Activated CD4-positive, alpha-beta memory T cell treated with anti-CD3 and anti-CD28 coated beads for 36 hours (primary cell): ENCODE measurements at regions of chr6 and their contacts with region 1.

Region 1: DNA sequence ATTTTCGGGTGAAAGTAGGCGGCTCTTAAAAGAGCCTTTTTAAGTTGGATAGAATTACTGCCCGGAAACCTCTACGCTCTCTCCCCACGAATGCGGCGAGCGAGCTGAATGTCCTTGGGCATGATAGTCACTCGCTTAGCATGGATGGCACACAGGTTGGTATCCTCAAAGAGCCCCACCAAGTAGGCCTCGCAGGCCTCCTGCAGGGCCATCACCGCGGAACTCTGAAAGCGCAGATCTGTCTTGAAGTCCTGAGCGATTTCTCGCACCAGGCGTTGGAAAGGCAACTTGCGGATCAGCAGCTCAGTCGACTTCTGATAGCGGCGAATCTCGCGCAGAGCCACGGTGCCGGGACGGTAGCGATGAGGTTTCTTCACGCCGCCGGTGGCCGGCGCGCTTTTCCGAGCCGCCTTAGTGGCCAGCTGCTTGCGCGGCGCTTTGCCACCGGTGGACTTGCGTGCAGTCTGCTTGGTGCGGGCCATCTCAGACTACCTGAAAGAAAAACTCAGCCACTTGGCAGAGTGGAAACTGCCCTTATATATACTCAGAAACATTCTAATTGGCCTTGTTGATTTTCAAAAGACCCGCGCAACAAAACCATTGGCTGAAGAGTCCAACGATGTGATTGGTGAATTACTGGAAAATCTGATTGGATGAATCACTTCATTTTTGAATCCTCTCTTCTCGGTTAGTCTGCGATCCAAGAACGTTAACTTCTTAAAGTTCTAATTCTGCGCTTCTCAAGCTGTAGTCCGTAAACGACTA is 93.9 kb upstream of the BTN3A2 start:
- DNase-seq: peak; percentile 86
- H3K4me3 Mint-ChIP-seq: no peak overlapping the region
- H3K27ac Mint-ChIP-seq: no peak overlapping the region
- H3K4me1 Mint-ChIP-seq: peaks cover 22% of the 10 kb centered on the region
- H3K27me3 Mint-ChIP-seq: peaks cover 2% of the 10 kb centered on the region

Region 2: DNA sequence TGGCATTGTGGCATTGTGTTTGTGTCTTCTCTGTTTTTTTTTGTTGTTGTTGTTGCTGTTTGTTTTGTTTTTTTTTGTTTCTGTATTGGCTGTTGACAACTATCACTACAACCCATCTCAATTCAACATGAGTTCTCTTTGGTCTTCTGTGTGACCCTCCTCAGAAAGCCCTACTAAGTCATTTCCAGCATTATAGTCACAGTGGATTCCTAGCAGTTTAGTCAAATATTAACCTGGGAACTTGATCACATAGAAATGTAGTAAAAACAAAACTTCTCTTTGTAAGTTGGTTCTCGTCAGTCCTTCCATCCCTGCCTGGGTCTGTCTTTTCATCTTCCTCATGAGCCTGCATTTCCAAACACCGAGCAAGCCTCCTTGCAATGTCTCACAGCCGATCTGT is 357.3 kb before region 1 on chr6:
- CTCF ChIA-PET with region 1: no interaction called
- POLR2A ChIA-PET with region 1: no interaction called
- intact Hi-C with region 1: no loop called
- DNase-seq: peak; percentile 35
- H3K4me3 Mint-ChIP-seq: no peak overlapping the region
- H3K27ac Mint-ChIP-seq: peak overlapping the region; percentile 65
- H3K4me1 Mint-ChIP-seq: peaks cover 52% of the 10 kb centered on the region
- H3K27me3 Mint-ChIP-seq: no peaks in the 10 kb centered on the region

Region 3: GRCh38 chr6:26054857-26055669 is 216.0 kb before region 1 on chr6:
- CTCF ChIA-PET with region 1: no interaction called
- POLR2A ChIA-PET with region 1: interaction called, 4 read pairs
- intact Hi-C with region 1: loop called (anchors 5 kb)
- DNase-seq: peak; percentile 94
- H3K4me3 Mint-ChIP-seq: peak overlapping the region; percentile 93
- H3K27ac Mint-ChIP-seq: peak overlapping the region; percentile 98
- H3K4me1 Mint-ChIP-seq: peaks cover 22% of the 10 kb centered on the region
- H3K27me3 Mint-ChIP-seq: peaks cover 14% of the 10 kb centered on the region

Region 4: GRCh38 chr6:26141378-26141904 is 129.6 kb before region 1 on chr6:
- CTCF ChIA-PET with region 1: no interaction called
- POLR2A ChIA-PET with region 1: no interaction called
- intact Hi-C with region 1: no loop called
- DNase-seq: no peak
- H3K4me3 Mint-ChIP-seq: no peak overlapping the region
- H3K27ac Mint-ChIP-seq: no peak overlapping the region
- H3K4me1 Mint-ChIP-seq: no peaks in the 10 kb centered on the region
- H3K27me3 Mint-ChIP-seq: no peaks in the 10 kb centered on the region

Region 5: DNA sequence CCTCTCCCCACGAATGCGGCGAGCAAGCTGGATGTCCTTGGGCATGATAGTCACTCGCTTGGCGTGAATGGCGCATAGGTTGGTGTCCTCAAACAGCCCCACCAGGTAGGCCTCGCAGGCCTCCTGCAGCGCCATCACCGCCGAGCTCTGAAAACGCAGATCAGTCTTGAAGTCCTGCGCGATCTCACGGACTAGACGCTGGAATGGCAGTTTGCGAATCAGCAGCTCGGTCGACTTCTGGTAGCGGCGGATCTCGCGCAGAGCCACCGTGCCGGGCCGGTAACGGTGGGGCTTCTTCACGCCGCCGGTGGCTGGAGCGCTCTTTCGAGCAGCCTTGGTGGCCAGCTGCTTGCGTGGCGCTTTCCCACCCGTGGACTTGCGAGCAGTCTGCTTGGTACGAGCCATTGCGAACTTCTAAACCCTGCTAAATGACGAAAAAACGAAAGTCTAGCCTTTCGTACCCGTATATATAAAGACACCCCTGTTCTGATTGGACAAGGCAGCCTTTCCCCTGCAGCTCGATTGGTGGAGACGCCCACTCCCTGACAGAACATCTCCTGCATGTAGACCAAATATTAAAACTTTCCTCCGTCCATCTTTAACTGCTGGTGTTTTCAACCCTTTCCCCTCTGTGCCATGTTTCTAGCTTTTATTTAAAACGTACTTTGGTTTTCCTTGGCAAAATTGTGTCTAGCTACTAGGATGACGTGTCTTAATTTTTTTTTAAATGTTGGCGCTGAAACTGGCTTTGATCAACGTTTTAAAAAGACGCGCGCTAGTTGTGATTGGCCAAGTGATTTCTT is 74.0 kb before region 1 on chr6:
- CTCF ChIA-PET with region 1: interaction called, 3 read pairs
- POLR2A ChIA-PET with region 1: interaction called, 125 read pairs
- intact Hi-C with region 1: no loop called
- DNase-seq: peak; percentile 84
- H3K4me3 Mint-ChIP-seq: peak overlapping the region; percentile 86
- H3K27ac Mint-ChIP-seq: peak overlapping the region; percentile 99
- H3K4me1 Mint-ChIP-seq: peaks cover 31% of the 10 kb centered on the region
- H3K27me3 Mint-ChIP-seq: peaks cover 3% of the 10 kb centered on the region

Region 6: DNA sequence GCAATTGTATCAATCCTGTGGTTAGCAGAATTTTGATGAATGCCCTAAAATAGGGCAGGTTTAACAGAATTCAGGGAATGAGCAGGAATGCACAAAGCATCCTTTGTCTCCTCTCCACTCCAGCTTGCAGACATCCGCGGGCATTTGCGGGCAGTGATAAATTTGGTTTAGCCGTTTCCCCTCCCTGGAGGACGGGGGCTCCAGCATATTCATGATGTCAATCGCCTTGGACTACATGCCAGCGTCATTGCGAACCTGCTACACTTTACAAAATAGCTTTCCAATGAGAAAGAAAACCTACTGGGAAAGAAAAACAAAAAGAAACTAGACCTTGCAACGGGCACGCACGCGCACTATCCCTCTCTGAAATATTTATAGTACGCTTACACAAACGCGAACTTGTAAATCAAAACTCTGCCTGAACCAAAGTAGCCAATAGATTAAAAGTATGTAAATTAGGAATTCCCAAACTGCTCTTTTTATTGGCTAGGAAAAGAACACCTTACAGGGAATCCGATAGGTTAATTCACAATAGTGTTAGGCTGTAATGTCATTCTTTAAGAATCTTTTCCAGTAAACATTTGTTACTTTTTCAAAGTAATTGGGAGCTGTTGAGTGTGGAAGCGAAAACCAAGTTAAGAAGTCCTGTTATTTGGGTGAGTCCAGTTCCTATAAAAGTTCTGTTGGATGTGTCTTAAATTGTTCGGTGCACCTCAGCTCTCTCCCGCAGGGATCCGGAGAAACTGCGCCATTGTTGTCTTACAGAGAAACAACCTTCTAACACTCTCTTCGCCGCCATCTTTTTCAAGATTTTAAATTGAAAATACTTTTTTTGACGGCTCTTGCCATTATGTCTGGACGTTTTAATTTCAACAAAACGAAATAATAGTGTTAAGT is 47.2 kb before region 1 on chr6:
- CTCF ChIA-PET with region 1: no interaction called
- POLR2A ChIA-PET with region 1: interaction called, 11 read pairs
- intact Hi-C with region 1: no loop called
- DNase-seq: peak; percentile 77
- H3K4me3 Mint-ChIP-seq: no peak overlapping the region
- H3K27ac Mint-ChIP-seq: no peak overlapping the region
- H3K4me1 Mint-ChIP-seq: peaks cover 13% of the 10 kb centered on the region
- H3K27me3 Mint-ChIP-seq: no peaks in the 10 kb centered on the region

Region 7: GRCh38 chr6:26249957-26250697 is 21.0 kb before region 1 on chr6:
- CTCF ChIA-PET with region 1: interaction called, 49 read pairs
- POLR2A ChIA-PET with region 1: interaction called, 27 read pairs
- intact Hi-C with region 1: loop called (anchors 1 kb)
- DNase-seq: peak; percentile 84
- H3K4me3 Mint-ChIP-seq: peak overlapping the region; percentile 82
- H3K27ac Mint-ChIP-seq: peak overlapping the region; percentile 99
- H3K4me1 Mint-ChIP-seq: peaks cover 22% of the 10 kb centered on the region
- H3K27me3 Mint-ChIP-seq: no peaks in the 10 kb centered on the region

Region 8: DNA sequence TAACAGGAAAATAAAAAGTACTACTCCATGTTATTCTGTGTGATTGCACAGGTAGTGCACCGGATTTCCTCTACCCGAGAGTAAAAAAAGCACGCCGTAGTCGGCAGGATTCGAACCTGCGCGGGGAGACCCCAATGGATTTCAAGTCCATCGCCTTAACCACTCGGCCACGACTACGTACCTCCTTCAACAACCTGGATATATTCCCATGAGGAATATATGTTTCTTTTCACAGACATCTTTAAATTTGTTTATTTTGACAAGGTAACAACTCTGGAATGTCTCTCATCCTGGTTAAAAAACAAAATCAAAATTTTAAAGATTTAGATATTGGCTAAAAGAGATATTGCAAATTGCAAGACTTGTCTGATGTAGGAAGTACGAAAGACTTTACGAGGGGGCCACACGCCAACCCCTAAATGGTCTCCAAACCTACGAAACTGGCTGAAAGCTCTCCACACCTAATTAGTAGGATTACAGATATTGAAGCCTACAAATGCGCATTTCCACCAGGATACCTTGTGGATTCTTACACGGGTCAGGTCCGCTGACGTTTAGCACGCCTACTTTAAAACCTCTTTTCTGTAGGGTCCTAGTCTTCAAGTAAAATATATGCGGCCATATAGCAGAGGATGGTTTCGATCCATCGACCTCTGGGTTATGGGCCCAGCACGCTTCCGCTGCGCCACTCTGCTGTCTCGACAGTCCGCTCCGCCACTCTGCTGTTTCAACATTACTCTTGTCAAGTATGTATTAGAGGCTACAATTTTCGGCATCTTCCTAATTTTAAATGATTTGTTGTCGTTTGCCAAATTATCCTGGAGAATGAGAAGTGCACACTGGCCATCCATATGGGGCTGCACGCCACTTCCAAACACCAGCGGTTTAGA is 41.7 kb after region 1 on chr6:
- CTCF ChIA-PET with region 1: interaction called, 4 read pairs
- POLR2A ChIA-PET with region 1: interaction called, 13 read pairs
- intact Hi-C with region 1: loop called (anchors 2 kb)
- DNase-seq: peak; percentile 89
- H3K4me3 Mint-ChIP-seq: peak overlapping the region; percentile 85
- H3K27ac Mint-ChIP-seq: peak overlapping the region; percentile 82
- H3K4me1 Mint-ChIP-seq: peaks cover 42% of the 10 kb centered on the region
- H3K27me3 Mint-ChIP-seq: peaks cover 7% of the 10 kb centered on the region

Region 9: GRCh38 chr6:26342106-26343004 is 71.3 kb after region 1 on chr6:
- CTCF ChIA-PET with region 1: no interaction called
- POLR2A ChIA-PET with region 1: no interaction called
- intact Hi-C with region 1: no loop called
- DNase-seq: peak; percentile 65
- H3K4me3 Mint-ChIP-seq: peak overlapping the region; percentile 76
- H3K27ac Mint-ChIP-seq: peak overlapping the region; percentile 69
- H3K4me1 Mint-ChIP-seq: peaks cover 8% of the 10 kb centered on the region
- H3K27me3 Mint-ChIP-seq: peaks cover 5% of the 10 kb centered on the region